AG04449 (cell line): ENCODE measurements at regions of chr7 and their contacts with region 1.

Region 1: DNA sequence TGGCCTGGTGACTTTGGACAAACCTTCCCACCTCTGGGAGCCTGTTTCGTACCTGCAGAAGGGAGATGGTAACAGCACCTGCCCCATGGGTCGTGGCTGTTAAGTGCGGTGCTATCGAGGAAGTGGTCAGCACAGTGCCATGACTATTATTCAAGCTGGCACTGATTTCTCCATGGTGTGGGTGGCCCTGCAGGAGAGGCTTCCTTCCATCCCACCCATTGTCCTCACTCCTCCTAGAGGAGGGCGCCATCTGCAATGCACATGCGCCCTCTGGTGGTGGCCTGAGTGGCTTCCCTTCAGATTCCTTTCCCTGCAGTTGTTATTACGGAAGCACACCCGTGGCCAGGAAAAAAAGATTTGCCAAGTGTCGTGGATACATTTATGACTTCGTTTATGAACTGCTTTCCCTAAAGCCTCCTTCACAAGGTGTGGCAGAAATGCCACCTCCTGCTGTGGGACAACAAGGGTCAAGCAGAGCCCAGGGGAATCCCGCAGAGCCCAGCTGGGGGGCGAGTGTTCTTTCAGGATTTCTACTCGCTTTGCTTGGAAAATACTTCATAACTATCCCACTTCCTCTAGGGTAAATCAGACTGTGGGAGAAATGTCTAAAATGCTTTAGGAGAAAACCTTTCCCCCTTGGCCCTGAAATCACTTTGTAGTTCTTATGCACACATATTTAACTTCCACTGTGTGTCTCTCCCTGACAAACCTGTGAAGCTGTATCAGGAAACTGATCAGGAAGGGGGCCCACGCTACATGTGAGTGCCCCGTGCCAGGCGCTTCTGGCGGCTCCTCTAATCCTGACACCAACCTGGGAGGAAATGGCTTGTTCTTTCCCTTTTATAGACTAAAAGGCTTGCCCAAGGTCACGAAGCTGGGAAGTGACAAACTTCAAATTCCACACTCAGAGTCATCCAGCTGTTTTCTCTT is 98.0 kb upstream of the ANLN start:
- DNase-seq: no peak
- H3K4me3 ChIP-seq: peak overlapping the region; percentile 50
- CTCF ChIP-seq: peak; percentile 94

Region 2: DNA sequence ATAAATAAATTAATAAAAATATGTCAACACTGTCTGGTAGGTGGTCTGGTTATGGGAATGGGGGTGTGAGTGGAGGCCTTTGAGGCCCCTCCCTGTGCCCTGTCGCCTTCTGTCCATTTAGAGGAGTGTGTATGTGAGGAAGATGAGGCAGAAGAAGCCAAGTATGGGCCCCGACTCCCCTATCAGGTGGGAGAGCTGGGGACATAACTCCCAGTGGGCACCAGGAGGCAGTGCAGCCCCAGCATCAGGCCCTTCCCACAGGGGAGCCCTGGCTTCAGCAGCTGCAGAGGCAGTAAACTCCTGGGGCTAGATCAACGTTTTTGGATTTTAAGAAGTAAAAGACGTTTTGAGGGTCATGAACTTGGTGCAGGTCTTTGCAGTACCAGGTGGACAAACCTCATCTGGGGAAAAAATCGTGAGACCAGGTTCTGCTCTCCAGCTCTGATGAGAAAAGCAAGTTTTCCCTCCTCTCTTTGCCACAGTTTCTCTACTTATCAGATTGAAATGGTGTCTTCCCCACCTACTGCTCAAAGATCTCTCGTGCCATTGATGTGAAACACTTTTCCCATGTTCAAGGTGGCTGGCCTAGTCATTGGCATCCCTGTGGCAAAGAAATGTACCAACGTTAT is 306.4 kb before region 1 on chr7:
- CTCF ChIA-PET with region 1: interaction called, 195 read pairs
- POLR2A ChIA-PET with region 1: interaction called, 3 read pairs
- DNase-seq: no peak
- H3K4me3 ChIP-seq: no peak overlapping the region
- CTCF ChIP-seq: peak; percentile 97

Region 3: GRCh38 chr7:36048141-36048901 is 243.3 kb before region 1 on chr7:
- CTCF ChIA-PET with region 1: interaction called, 15 read pairs
- POLR2A ChIA-PET with region 1: no interaction called
- DNase-seq: peak; percentile 87
- H3K4me3 ChIP-seq: no peak overlapping the region
- CTCF ChIP-seq: no peak

Region 4: DNA sequence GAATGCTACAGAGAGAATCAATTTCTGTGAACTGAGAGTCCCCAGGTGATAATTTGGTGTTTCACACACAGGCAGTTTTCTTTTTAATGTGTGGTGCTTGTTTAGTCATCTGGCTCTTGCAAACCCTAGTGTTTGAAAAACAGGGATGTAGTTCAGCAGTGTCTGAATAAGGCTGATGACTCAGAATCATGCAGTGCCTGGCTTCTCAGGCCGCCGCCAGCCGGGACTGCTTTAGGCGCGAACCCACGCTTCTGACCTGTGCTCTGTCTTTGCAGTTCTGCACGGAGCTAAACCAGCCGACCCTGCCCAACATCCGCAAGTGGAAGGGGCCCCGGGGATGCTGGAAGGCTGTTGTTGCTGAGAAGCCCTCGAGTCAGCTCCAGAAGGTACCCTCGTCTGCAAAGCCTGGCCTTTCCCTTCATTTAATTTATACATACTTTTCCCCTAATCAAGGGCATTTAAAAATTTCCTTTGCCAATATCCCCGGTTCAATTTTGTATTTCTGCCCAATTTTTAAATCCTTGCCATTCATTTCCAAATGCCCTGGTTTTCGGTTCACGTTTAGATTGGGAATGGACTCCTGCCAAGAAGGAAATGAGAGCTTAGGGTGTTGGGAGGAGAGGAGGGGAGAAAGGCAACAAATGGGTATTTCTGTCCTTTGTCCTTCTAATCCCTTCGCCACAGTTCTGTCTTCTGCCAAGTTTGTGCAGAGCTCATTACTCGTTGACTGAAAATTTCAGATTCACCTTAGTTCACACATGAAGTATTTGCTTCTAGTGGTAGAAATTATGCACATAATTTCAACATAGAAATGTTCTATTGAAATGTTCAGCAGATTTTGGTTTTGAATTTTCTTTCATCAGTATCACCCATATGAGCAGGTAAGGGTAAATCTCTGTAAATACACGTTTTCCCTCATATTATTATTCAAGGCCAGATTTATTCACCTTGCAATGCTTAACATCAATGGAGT is 10.5 kb before region 1 on chr7:
- CTCF ChIA-PET with region 1: interaction called, 39 read pairs
- POLR2A ChIA-PET with region 1: no interaction called
- DNase-seq: peak; percentile 52
- H3K4me3 ChIP-seq: peak overlapping the region; percentile 34
- CTCF ChIP-seq: no peak

Region 5: GRCh38 chr7:36303202-36304098 is 11.8 kb after region 1 on chr7:
- CTCF ChIA-PET with region 1: interaction called, 39 read pairs
- POLR2A ChIA-PET with region 1: no interaction called
- DNase-seq: peak; percentile 75
- H3K4me3 ChIP-seq: no peak overlapping the region
- CTCF ChIP-seq: no peak

Region 6: DNA sequence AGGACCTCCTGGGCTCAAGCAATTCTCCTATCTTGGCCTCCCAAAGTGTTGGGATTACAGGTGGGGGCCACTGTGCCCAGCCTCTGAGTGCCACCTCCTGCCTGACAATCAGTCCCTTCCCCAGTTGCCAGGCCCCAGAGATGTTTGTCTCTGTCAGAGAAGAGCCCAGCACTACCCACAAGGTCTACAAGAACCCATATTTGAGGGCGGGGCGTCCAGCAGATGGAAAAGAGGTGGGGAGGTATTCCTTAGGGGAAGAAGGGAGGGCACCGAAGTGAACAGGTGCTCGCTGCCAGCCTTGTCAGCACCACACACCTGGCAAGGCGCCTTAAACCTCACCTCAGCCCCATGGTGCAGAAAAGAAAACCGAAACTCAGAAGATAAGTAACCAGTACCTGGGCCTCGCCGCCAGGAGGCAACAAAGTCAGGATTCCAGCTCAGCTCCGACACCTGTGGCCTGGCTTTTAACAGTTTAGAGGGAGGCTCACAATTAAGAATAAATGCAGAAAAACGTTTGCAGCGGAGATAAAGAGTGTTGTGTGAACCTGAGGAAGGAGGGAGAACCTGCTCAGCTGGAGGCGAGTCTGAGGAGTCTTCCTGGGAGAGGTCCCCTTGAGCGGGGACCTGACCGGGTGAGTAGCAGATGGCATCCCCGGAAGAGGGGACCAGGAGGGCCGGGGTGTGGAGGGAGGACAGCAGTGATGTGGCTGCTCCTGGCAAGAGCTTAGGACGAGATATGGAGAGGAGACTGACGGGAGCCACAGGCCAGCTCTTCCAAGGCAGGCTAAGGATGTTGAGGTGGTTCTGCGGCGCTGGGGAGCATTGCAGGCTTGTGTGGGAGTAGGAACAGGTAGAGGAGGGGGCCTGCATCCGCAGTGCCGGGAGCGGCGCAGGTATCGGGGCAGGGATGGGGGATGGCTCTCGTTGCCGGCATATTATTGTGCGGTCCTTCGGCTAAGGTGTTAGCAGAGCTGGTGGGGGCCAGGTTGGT is 21.0 kb after region 1 on chr7:
- CTCF ChIA-PET with region 1: interaction called, 96 read pairs
- POLR2A ChIA-PET with region 1: no interaction called
- DNase-seq: no peak
- H3K4me3 ChIP-seq: no peak overlapping the region
- CTCF ChIP-seq: peak; percentile 15

Region 7: DNA sequence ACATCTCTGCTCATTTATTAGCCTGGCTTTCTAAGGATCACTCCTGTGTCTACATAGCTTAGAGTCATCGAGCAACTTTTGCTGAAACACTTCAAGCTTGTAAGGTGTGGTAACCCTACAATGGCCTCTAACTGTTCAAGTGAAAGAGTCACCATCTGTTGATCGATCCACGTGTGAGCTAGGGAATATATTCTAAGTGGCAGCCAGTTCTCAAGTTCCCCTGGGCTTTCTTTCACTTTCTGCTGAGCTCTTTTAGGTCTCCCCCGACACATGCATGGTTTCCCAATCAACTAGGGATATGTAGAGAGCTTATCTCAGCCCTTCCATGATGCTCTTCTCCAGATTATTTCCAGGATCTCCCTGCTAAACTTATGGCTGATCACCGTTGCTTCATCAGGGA is 417.1 kb after region 1 on chr7:
- CTCF ChIA-PET with region 1: no interaction called
- POLR2A ChIA-PET with region 1: no interaction called
- DNase-seq: no peak
- H3K4me3 ChIP-seq: no peak overlapping the region
- CTCF ChIP-seq: no peak